Left colon (tissue), 2 donors: ENCODE measurements at regions of chr13 and their contacts with region 1.

Region 1: DNA sequence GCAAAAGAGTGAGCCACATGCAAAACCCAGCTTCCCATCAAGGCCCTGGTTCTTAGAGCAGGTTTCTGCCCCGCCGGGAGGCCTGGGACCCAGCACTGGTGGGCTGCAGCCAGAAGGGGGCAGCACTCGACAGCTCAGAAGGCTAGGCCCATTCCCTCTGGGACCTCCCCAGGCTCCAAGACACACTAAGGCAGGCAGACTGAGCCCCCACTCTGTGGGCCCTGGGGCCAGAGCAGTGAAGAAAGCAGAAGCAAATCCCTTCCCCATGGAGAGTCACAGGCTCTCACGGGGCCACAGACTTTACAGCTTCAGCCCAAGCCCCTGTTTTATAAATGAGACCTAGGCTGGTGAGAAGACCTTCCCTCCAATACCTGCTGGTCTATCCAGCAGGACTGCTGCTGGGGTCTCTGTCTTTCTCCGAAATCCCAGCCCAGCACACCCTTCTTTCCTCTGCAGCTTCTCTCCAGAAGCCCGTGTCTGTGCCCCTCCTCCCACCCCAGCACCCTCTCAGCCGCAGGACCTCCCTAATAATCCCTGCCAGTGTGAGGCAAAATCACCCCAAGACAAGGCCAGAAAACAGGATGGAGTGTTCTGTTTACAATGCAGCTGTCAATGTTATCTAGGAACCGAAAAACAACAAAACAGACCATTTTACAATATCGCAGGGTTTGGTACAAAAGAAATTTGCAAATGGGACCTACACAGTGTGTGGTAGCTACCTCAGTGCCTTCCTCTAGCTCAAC is 109.3 kb downstream of the ABCC4 start:
- DNase-seq: peak; percentile 70 to 86
- ATAC-seq: peak; percentile 94

Region 2: GRCh38 chr13:94947392-94947791 is 244.6 kb before region 1 on chr13:
- intact Hi-C with region 1: no loop called
- DNase-seq: no peak
- ATAC-seq: no peak

Region 3: DNA sequence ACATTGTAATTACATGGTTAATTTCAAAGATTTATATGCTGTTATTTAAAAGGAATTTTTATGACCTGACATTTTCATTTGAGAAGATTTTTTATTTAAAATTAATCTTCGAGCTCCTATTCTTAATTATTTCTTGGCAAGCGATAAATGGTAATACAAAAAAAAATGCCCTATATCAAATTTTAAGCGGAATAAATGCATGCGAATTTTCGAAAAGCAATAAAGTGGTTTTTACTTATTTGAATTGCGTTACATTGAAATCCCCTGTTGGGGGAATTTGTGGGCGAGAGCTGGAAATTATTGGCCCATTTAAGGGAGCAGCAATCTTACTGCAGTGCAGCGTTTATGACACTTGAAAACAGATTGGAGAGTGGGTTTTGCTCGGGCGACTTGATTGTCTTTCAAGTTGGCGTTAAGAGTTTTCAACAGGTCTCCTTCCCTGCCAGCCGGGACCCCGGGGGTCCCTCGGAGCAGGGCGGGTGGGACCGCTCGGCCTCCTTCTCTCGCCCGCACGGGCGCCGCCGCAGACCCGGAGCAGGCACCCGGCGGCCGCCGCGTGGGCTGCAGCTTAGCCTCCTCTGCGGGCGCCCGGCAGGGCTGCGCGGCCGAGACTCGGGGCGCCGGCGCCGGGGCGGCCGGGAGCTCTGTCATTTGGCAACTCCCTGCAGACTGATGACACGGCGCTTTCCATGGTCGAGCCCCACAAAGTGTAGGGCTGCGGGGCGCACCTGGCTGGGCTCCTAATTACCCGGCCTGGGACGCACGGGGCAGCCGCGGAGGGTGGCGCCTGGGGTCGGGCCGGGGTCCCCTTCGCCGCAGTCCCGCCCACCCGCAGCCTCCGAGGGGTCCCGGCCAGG is 224.6 kb before region 1 on chr13:
- intact Hi-C with region 1: no loop called
- DNase-seq: no peak
- ATAC-seq: no peak

Region 4: GRCh38 chr13:95256086-95256485 is 64.1 kb after region 1 on chr13:
- intact Hi-C with region 1: no loop called
- DNase-seq: no peak
- ATAC-seq: no peak

Region 5: GRCh38 chr13:95296326-95296925 is 104.4 kb after region 1 on chr13:
- intact Hi-C with region 1: loop called in 1 of 2 experiments (anchors 10 kb)
- DNase-seq: peak; percentile 58 to 67
- ATAC-seq: peak; percentile 57

Region 6: GRCh38 chr13:95378603-95379002 is 186.6 kb after region 1 on chr13:
- intact Hi-C with region 1: loop called (anchors 5 to 10 kb)
- DNase-seq: no peak
- ATAC-seq: no peak

Region 7: DNA sequence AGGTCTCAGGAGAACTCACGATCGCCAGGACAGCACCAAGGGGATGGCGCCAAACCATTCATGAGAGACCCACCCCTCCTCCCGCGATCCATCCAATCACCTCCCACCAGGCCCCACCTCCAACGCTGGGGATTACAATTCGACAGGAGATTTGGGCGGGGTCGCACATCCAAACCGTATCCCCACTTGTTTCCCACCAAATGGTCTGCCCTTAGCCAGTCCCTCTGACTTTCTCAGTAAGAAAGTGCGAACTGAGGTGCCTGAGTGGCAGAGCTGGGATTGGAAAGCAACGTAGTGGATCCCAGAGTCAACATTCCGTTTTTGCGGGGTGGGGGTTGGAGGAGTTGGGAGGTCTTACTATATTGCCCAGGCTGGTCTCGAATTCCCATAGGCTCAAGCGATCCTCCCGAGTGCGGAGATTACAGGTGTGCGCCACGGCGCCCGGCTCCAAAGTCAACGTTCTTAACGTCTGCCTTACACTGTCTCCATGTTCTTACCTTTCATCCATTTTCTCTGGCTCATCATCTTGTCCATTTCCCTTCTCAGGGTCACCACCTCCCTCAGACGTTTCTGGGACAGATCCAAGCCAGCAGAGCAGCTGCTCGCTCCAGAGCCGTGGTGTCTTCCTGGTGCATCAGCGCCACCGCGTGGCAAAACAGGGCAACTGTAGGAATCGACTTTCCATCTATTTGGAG is 212.0 kb after region 1 on chr13:
- intact Hi-C with region 1: loop called (anchors 2 to 10 kb)
- DNase-seq: peak; percentile 66 to 81
- ATAC-seq: peak; percentile 96